Activated B cell treated with CpG ODN at 0.5 μM for 24 hours (primary cell): ENCODE measurements at regions of chr15 and their contacts with region 1.

Region 1: GRCh38 chr15:41904541-41905005 is 10.7 kb upstream of the SPTBN5 start:
- DNase-seq: peak; percentile 57
- ATAC-seq: peak; percentile 93
- H3K4me3 Mint-ChIP-seq: no peak overlapping the region
- H3K27ac Mint-ChIP-seq: peak overlapping the region; percentile 11
- H3K4me1 Mint-ChIP-seq: peaks cover 6% of the 10 kb centered on the region
- H3K27me3 Mint-ChIP-seq: no peaks in the 10 kb centered on the region
- CTCF ChIP-seq: peak; percentile 69

Region 2: DNA sequence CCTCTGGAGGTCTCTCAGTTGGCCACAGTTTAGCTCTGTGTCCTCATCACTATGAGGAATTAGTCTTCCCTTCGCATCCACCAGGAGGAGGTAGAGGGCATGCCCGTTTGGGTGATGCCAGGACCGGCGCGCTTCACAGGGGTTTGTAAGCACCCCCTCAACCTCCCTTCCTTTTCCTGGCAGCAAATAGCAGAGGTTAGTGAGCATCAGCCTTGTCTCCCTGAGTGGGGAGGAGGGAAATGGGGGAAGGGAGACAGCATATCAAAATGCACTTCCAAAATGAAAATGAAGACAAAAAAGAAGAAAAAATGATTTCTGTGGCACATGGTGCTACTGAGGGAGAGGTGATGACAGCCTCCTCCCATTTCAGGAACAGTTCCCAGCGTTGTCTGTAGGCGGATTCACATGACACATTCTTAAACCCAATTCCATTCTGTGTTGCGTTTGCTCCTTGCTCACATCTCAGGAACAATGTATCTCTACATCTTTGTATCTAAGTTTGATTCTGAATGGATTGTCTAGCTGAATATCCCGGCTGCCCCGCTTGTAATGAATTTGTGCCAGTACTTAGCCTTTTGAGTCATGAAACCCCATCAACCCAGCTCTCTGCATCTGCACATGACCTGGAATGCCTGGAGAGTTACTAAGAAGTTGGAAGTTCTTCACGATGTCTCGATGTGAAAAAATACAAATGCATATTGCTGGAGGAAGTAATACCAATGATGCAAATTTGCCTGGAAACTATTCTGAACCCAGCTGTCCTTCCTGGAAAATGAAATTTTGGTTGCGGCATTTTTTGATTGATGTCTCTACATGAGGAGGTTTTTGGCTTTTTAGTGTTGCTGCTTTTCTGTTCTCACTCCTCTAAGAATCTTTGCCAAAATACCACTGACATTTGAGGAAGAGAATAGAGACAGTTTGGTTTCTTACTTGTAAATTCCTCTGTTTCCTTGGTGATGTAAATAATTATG is 300.3 kb before region 1 on chr15:
- CTCF ChIA-PET with region 1: no interaction called
- POLR2A ChIA-PET with region 1: no interaction called
- intact Hi-C with region 1: loop called (anchors 2 kb)
- DNase-seq: peak; percentile 25
- ATAC-seq: peak; percentile 96
- H3K4me3 Mint-ChIP-seq: peak overlapping the region; percentile 64
- H3K27ac Mint-ChIP-seq: no peak overlapping the region
- H3K4me1 Mint-ChIP-seq: peaks cover 10% of the 10 kb centered on the region
- H3K27me3 Mint-ChIP-seq: peaks cover 26% of the 10 kb centered on the region
- CTCF ChIP-seq: peak; percentile 13

Region 3: DNA sequence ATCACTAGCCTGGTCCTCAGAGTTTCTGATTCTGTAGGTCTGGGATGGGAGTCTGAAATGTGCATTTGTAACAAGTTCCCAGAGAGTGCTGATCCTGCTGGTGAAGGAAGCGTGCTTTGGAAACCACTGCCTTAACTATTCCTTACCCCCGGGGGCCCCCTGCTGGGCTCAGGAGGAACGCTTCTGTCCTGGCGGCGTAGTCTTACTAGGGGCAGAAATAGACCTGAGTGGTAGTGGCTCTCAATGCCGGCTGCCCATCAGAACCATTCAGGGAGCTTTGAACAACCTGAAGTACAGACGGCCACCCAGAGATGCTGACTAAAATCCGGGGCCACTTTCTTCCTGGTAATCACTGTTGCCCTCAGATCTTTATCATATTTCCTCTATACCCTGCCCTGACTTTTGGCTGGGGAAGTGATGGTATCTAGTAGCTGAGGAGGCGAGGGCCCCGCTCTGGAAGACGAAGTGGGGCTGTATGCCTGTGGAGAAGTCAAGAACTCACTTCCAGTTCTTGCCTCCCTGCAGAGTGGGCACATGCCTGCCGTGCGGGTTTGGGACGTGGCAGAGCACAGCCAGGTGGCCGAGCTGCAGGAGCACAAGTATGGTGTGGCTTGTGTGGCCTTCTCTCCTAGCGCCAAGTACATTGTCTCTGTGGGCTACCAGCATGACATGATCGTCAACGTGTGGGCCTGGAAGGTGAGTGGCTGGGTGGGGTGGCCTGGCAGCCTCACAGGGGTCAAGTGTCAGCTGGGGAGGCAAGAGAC is 93.0 kb before region 1 on chr15:
- CTCF ChIA-PET with region 1: interaction called, 44 read pairs
- POLR2A ChIA-PET with region 1: no interaction called
- intact Hi-C with region 1: loop called (anchors 1 kb)
- DNase-seq: peak; percentile 67
- ATAC-seq: peak; percentile 97
- H3K4me3 Mint-ChIP-seq: no peak overlapping the region
- H3K27ac Mint-ChIP-seq: no peak overlapping the region
- H3K4me1 Mint-ChIP-seq: peaks cover 11% of the 10 kb centered on the region
- H3K27me3 Mint-ChIP-seq: no peaks in the 10 kb centered on the region
- CTCF ChIP-seq: peak; percentile 85

Region 4: GRCh38 chr15:41860049-41860828 is 44.3 kb before region 1 on chr15:
- CTCF ChIA-PET with region 1: interaction called, 3 read pairs
- POLR2A ChIA-PET with region 1: no interaction called
- intact Hi-C with region 1: loop called (anchors 1 kb)
- DNase-seq: no peak
- ATAC-seq: no peak
- H3K4me3 Mint-ChIP-seq: no peak overlapping the region
- H3K27ac Mint-ChIP-seq: no peak overlapping the region
- H3K4me1 Mint-ChIP-seq: no peaks in the 10 kb centered on the region
- H3K27me3 Mint-ChIP-seq: peaks cover 3% of the 10 kb centered on the region
- CTCF ChIP-seq: no peak

Region 5: DNA sequence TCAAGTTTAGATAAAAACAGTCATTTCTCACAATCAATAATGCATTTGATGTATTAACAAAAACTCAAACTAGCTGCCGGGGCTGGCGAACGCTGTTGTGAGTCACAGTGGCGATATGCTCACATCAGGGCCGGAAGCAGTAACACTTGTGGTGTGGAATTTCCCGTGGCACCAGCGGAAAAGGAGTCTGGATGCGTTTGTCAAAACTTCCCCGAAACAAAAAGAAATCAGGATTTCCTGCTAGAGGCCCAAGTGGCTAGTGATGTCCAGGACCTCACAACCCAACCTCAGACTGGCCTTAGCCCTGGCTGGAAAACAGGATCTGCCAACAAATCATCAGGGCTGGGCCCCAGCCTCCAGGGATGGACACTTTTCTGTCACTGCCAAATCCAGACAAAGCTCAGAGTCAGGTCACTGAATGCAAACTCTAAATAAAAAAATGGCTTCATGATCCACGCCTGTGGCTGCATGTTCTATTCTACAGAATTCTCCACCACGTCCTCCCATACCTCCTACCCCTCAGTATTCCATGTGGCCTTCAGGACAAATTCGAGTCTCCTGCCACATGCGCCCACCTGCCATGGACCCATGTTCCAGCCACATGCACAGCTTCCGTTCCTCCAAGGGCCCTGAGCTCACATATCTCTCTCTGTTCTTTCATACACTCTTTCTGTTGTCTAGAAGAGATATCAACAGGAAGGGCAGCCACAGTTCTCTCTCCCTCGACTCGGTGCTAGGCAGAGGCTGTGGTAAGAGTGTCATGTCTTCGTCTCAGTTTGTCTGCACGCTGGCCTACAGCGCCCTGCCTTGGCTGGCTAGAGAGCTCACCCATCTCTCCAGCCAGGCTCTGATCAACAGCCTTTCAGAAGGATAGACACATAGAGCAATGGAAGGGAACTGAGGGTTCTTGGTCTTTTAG is 32.3 kb after region 1 on chr15:
- CTCF ChIA-PET with region 1: interaction called, 10 read pairs
- POLR2A ChIA-PET with region 1: interaction called, 4 read pairs
- intact Hi-C with region 1: loop called (anchors 2 kb)
- DNase-seq: no peak
- ATAC-seq: peak; percentile 65
- H3K4me3 Mint-ChIP-seq: no peak overlapping the region
- H3K27ac Mint-ChIP-seq: peak overlapping the region; percentile 90
- H3K4me1 Mint-ChIP-seq: peaks cover 55% of the 10 kb centered on the region
- H3K27me3 Mint-ChIP-seq: no peaks in the 10 kb centered on the region
- CTCF ChIP-seq: no peak

Region 6: GRCh38 chr15:42056934-42057779 is 152.6 kb after region 1 on chr15:
- CTCF ChIA-PET with region 1: no interaction called
- POLR2A ChIA-PET with region 1: no interaction called
- intact Hi-C with region 1: loop called (anchors 5 kb)
- DNase-seq: no peak
- ATAC-seq: peak; percentile 80
- H3K4me3 Mint-ChIP-seq: peak overlapping the region; percentile 45
- H3K27ac Mint-ChIP-seq: no peak overlapping the region
- H3K4me1 Mint-ChIP-seq: peaks cover 13% of the 10 kb centered on the region
- H3K27me3 Mint-ChIP-seq: peaks cover 32% of the 10 kb centered on the region
- CTCF ChIP-seq: no peak